Cardiac septum (tissue), 1 donor: ENCODE measurements at regions of chr2 and their contacts with region 1.

Region 1: DNA sequence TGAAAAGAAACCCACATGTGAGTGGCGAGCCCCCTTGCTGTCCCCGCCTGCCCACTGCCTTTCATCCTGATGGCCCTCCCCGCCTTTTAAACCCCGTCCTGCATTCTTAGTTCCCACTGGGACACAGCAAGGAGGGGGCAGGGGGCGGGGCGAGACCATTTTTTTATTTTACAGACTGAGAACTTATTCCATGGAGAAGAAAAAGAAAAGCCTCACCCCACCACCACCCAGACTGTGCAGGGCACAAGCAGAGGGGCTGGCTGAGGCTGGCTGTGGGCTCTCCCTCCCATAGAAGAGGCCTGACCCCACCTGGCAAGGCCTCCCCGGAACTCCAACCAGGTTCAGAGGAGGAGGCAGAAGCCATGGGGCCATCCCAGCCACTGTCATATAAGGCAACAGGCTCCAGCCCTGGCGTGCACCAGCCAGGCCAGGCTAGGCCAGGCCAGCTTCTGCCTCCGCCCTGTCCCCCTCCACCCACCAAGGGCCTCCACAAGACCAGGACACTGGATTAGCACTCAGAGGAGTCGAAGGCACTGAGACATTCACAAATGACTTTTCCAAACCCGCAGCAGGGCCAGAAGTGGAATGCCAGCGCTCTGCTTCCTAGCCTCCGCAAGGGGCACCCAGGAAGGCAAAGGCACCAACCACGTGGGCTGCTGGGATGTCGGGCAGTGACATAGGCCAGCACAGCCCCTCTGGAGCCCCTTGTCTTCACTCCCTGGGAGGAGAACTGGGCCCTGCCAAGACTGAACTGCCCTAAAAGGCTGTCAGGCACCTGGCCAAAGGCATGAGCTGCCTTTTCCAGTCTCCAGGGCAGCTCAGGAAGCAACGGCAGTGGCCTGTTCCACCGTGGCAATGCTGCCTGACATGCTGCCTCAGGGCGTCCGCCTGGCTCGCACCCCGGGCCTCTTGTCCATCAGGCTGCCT is 37.5 kb upstream of the SEMA4C start:
- DNase-seq: peak; percentile 90

Region 2: DNA sequence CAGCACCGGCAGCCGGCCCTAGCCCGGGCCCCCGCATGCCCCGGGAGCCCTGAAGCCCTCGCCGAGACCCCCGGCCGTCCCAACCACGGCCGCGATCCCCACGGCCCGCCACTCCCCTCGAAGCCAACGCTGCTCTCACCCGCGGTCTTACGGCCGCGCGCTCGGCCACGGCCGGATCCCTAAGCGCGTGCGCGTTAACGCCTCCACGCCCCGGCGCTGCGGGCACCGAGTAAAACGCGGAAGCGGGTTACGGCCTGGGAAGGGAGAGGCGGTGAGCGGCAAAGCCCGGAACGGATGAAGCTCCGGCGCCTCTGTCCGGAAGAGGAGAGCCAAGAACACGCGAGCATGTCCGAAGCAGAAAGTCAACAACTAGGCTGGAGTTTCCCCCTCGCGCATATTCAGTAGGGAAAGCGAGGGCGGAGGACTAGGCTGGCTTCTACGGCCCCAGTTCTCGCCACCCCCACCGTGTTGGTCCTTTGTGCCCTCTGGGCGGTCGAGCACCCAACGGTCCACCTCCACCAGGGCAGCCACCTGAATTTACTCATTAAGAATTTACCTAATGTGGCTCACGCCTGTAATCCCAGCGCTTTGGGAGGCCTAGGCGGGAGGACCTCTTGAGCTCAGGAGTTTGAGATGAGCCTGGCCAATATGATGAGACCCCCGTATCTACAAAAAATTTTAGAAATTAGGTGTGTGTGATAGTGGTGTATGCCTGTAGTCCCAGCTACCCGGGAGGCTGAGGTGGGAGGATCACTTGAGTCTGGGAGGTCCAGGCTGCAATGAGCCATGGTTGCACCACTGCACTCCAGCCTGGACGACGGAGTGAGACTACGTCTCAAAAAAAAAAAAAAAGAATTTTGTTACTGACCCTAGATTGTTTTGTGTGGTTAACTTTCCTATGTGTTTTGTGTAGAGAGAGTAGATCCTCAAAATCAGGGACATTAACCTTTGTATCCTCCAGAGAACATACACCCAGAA is 268.9 kb before region 1 on chr2 and contains the start of gene KANSL3:
- intact Hi-C with region 1: loop called (anchors 5 kb)
- DNase-seq: peak; percentile 97
- total RNA-seq, gene KANSL3: 35.3 TPM

Region 3: GRCh38 chr2:96763511-96764252 is 143.7 kb before region 1 on chr2:
- intact Hi-C with region 1: no loop called
- DNase-seq: no peak

Region 4: DNA sequence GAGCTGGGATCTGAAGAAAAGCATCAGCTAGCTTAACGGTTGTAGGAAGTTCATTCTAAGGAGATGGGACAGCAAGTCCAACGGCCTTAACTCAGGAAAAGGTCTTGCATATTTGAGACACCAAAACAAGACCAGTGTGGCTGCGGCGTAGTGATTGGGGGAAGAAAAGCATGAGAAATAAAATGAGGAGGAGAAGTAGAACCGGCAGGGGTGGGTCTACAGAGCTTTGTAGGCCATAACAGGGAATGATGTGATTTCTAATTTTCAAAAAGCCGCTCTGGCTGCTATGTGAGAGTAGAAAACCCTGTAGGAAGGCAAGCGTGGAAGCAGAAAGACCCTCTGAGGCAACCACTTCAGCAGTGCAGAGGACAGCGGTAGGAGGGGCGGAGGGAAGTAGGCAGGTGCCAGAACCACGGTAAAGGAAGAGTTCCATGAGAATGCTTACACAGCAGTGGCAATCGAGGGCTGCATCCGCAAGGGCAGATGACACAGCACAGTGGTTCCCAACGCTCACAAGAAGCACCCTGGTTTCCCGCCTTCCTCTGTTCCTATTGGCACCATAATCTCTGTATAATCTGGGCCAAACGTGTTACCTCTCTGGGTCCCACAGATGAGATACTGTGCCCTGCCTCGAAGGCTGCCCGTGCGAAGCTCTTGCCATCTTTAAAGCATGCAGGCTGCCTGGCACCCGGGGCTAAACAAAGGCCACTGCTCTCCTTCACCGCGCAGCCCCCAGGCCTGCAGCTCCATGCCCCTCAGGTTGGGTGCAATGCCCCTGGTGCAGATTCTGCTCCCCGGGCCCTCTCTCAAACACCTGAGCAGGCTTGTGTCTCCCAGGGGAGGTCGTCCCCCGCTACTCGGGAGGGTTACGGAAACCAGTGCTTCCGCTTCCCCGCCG is 50.4 kb before region 1 on chr2:
- intact Hi-C with region 1: loop called (anchors 1 kb)
- DNase-seq: no peak

Region 5: GRCh38 chr2:96868555-96869280 is 38.7 kb before region 1 on chr2:
- intact Hi-C with region 1: loop called (anchors 1 kb)
- DNase-seq: peak; percentile 90

Region 6: GRCh38 chr2:96881349-96882195 is 25.8 kb before region 1 on chr2:
- intact Hi-C with region 1: loop called (anchors 1 kb)
- DNase-seq: no peak

Region 7: GRCh38 chr2:96888072-96889011 is 19.0 kb before region 1 on chr2:
- intact Hi-C with region 1: loop called (anchors 1 kb)
- DNase-seq: no peak

Region 8: DNA sequence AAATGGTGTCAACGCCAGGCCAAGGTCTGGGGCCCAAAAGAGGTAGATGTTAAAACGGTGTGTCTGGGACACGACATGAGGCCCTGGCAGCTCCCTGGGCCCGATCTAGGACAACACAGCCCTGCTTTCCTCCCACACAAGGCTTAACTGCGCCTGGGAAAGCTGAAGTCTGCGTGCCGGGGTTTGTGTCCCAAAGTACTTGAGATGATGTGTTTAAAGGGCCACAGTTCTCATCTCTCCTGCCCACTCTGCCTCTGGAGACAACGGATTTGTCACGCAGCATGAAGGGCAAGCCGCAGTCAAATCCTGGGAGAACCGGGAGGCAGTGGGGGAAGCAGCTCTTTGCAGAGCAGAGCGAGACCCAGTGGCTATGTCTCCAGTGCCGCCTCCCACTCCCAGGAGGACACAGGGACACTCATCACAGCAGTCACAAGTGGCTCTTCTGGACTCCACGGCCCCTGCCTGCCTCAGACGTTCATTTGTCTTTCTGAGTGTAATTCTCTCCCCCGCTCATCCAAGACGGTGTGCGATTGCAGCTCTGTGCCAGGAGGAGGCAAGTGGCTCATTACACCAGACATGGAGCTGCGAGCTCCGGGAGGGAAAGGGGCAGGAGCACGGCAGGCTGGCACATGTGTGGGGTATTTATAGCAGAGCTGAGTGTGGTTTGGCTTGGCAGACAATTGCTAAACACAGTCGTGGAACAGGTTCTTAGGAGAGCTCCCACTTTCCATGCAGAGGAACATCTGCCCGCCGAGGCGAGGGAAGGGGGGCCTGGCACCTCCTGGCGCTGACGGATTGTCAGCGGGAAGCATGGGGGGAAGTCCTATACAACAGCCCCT is 20.2 kb after region 1 on chr2:
- intact Hi-C with region 1: loop called (anchors 1 kb)
- DNase-seq: no peak